ENCODE measurements at regions of chr12 and their contacts with region 1.

Region 1: GRCh38 chr12:14845350-14845750 is 2.0 kb upstream of the ART4 start:
- DNase-seq: peak; percentile 40
- H3K4me3 ChIP-seq: no peak overlapping the region
- H3K27ac ChIP-seq: peak overlapping the region; percentile 45 to 52
- H3K4me1 ChIP-seq: peaks cover 8% of the 10 kb centered on the region
- H3K27me3 ChIP-seq: no peaks in the 10 kb centered on the region
- CTCF ChIP-seq: peak; percentile 56 to 88 (median 78)
- POLR2A ChIP-seq: no peak

Region 2: DNA sequence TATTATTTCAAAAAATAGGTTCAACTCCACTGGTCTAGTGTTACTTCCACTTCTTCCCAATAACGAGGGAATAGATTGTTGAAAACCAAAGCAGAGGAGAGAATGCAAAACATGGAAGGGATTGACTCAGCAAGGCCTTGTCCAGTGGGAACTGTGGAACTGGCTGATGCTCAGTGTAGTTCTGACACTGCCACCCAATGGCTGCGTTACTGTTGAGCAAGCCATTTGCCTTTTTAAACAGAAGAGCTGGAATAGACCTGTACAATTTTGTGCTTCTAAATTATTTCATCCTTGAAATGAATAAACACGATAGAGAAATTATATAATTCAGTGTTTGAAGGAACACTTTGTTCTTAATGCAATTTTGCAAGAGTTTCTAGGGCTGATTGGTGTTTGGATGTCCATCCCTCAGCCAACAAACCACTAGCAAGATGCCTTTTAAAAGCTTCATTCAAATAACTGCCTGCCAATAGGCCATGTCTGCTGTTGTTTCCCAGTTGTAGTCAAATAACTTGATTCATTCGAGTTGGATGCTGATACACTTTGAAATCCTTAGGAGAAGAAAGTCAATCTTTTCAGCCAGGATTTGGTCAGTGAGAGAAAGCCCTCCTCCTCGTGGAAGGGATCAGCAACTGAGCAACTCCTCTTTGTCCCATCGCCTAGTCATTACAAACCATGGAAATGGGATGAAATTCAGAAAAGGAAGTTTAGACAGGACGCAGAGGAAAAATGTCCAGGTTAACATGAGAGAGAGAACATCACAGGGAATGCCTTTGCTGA is 47.6 kb after region 1 on chr12:
- intact Hi-C with region 1: loop called (anchors 5 kb)
- DNase-seq: no peak
- H3K4me3 ChIP-seq: no peak overlapping the region
- H3K27ac ChIP-seq: peak overlapping the region; percentile 34 to 56
- H3K4me1 ChIP-seq: no peaks in the 10 kb centered on the region
- H3K27me3 ChIP-seq: no peaks in the 10 kb centered on the region
- CTCF ChIP-seq: no peak
- POLR2A ChIP-seq: no peak

Region 3: DNA sequence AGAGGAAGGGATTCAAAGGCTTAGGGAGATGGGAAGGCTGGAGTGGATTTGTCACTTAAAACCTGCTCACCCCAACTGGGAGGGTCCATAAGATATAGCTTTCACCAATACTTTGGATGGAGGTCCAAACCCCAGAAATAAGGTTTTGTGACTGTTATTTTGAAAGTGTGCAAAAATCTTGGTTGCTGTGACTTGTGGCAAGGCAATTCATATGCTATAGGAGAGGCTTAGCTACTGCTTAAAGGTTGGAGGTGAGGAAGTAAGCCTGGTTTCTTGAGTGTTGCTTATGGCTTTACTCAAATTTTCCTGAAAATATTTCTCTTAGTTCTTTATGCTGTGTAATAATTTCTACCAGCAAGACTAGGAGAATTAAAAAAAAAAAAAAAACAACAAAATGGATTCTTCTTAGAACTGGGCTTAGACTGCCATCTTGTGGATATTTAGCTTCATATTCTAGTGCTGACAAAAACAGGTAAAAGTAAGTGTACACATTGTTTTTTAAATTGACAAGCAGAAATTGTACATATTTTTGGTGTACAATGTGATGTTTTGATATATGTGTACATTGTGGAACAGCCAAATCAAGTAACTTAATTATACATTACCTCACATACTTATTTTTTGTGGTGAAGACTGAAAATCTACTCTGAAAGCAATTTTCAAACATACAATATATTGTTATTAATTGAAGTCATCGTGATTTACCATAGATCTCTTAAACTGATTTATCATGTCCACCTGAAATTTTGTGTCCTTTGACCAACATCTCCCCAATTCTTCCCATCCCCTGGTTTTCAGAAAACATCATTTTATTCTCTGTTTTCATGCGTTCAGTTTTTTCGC is 150.5 kb after region 1 on chr12:
- intact Hi-C with region 1: loop called (anchors 1 kb)
- DNase-seq: no peak
- H3K4me3 ChIP-seq: no peak overlapping the region
- H3K27ac ChIP-seq: peak overlapping the region in 1 of 2 donors; percentile 2
- H3K4me1 ChIP-seq: no peaks in the 10 kb centered on the region
- H3K27me3 ChIP-seq: no peaks in the 10 kb centered on the region
- CTCF ChIP-seq: peak in 3 of 4 experiments; percentile 71 to 74 (median 72)
- POLR2A ChIP-seq: no peak

Region 4: DNA sequence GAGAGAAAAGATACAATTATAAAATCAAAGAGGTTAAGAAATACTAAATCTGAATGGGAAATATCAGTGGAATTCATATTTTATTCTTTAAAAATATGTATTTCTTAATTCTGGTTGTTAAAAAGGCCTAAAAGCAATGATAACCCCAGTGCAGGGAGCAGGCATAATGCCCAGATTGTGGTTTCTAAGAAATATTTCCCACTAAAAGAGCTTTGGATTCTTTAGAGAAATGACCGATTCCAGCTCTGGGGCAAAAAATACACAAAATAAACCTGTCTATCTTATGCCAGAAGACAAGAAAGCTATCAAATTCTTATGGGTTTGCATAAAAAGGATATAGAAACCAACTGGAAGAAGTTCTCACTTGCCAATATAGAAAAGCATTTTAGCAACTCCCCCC is 199.1 kb after region 1 on chr12:
- intact Hi-C with region 1: no loop called
- DNase-seq: no peak
- H3K4me3 ChIP-seq: no peak overlapping the region
- H3K27ac ChIP-seq: no peak overlapping the region
- H3K4me1 ChIP-seq: no peaks in the 10 kb centered on the region
- H3K27me3 ChIP-seq: no peaks in the 10 kb centered on the region
- CTCF ChIP-seq: no peak
- POLR2A ChIP-seq: no peak

Region 5: DNA sequence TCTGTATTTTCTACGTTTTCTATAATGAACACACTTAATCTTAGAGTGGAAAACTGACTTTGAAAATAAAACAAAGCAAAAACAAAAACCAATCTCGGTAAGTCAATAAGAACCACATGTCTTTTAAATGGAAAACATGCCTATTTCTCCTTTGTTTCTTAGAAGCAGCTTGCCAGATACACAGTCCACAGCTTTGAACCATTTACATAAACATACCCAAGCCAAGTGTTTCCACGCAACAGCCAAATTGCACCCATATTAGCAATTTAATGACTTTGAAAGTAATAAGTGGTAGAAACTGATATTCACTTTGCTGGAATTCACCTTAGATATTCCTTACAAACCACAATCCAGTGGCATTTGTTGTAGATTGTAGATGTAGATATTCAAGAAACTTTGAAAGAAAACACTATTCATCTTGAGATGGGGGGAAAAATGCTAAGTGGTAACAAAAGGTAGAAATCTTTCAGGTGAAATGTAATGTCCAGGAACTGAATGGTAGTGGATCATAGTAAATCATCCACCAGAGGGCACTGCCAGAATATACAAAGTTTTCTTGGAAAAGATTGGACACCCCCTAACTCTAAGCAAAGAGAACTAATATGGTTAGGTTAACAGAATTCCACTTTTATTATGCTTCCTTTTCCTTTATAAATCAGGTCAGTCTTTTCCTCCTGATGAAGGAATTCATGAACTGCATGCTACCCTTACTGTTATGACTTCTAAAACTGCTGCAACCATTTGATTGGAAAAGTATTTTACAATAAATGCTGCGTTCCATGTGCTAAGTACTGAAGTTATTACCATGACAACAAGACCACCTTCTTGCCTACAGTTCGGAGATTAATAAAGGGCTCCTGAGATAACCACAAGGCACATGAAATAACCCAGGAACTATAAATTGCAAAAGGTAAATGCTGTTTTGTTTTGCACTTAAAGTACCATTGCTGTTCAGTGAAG is 306.1 kb after region 1 on chr12:
- intact Hi-C with region 1: loop called (anchors 10 kb)
- DNase-seq: peak; percentile 28
- H3K4me3 ChIP-seq: no peak overlapping the region
- H3K27ac ChIP-seq: peak overlapping the region in 1 of 2 donors; percentile 5
- H3K4me1 ChIP-seq: no peaks in the 10 kb centered on the region
- H3K27me3 ChIP-seq: no peaks in the 10 kb centered on the region
- CTCF ChIP-seq: peak in 3 of 4 experiments; percentile 61 to 79 (median 79)
- POLR2A ChIP-seq: no peak

Region 6: DNA sequence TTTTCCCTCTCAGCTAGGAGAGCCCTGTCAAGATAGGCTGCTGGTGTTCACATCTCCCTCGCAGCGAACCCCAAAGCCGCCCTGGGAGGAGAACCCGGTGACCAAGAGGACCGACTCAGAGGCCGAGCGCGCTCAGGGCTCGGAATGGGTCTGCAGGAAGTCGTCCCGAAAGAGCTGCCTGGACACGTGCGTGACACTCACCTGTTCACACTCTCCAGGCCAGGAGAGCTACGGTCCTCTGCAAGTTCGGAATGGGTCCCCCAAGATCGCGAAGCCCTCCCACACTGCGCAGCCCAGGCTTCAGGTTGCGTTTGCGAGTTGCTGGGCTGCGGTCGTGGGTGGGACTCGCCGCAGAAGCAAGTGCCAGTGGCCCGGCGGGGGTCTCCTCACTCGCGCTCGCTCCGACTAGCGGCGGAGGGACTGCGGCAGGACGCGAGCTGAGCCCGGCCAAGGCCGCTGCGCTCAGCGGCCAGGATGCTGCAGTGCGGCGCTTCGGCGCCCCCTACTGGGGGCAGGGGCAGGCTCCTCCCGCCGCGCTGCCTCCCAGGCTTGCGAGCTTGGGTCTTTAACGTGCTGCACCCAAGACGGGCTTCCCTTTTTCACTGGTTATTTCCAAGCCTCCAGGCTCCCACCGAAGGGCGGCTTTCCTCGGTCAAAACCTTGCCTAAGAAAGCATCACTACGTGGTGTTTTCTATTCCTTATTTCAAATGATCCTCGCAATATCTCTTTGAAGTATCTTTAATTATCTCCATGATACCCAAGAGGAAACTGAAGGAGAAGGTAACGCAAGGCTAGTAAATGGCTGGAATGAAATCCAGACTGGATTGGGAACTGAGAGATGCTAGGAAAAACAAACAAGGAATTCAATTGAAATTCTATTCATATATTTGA is 375.9 kb after region 1 on chr12 and contains the start of gene RERG:
- intact Hi-C with region 1: loop called (anchors 5 kb)
- DNase-seq: peak; percentile 72
- H3K4me3 ChIP-seq: peak within 1 kb of the TSS; percentile 35 to 43
- H3K27ac ChIP-seq: peak within 1 kb of the TSS; percentile 69 to 70
- H3K4me1 ChIP-seq: no peaks in the 10 kb centered on the region
- H3K27me3 ChIP-seq: no peaks in the 10 kb centered on the region
- CTCF ChIP-seq: peak; percentile 93 to 97 (median 95)
- POLR2A ChIP-seq: no peak
- total RNA-seq, gene RERG: 12.7 to 13.3 TPM

Region 7: DNA sequence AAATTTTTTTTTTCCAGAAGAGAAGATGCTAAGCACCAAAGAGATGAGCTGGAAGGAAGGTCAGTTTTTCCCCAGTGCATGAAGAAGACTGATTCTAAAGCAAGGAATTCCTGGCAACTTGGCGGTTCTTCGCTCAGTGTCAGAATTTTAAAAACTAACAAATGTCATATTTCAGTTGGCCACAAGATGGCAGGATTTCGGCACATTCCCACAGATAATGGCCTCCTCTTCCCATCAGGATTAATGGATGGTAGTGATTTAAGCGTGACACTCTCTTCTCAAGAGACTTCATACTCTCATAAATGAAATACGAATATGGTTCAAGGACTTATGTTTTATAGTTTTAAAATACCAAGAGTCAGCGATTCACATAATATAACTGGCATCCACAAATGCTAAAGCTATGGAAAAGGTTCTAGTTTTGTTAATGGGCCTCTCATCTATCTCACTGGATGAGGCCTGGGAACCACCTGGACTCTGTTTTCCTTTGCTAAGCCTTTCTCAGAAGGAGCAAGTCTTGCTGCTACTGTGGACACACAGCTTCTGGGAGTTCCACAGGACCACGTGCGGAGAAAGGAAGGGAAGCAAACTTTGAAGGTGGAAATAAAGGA is 430.8 kb after region 1 on chr12:
- intact Hi-C with region 1: loop called (anchors 10 kb)
- DNase-seq: peak; percentile 43
- H3K4me3 ChIP-seq: no peak overlapping the region
- H3K27ac ChIP-seq: no peak overlapping the region
- H3K4me1 ChIP-seq: peaks cover 9% of the 10 kb centered on the region
- H3K27me3 ChIP-seq: no peaks in the 10 kb centered on the region
- CTCF ChIP-seq: peak; percentile 70 to 81 (median 74)
- POLR2A ChIP-seq: no peak

Measured in prostate gland (tissue), 2 donors.